ENCODE measurements at regions of chr13 and their contacts with region 1.

Region 1: GRCh38 chr13:98869408-98870090 is 108.3 kb downstream of the DOCK9 start:
- DNase-seq: no peak
- H3K4me3 Mint-ChIP-seq: no peak overlapping the region
- H3K27ac Mint-ChIP-seq: no peak overlapping the region
- H3K4me1 Mint-ChIP-seq: peaks cover 21% of the 10 kb centered on the region
- H3K27me3 Mint-ChIP-seq: no peaks in the 10 kb centered on the region

Region 2: GRCh38 chr13:98685146-98685545 is 184.4 kb before region 1 on chr13:
- CTCF ChIA-PET with region 1: no interaction called
- POLR2A ChIA-PET with region 1: no interaction called
- DNase-seq: no peak
- H3K4me3 Mint-ChIP-seq: no peak overlapping the region
- H3K27ac Mint-ChIP-seq: no peak overlapping the region
- H3K4me1 Mint-ChIP-seq: no peaks in the 10 kb centered on the region
- H3K27me3 Mint-ChIP-seq: peaks cover 14% of the 10 kb centered on the region

Region 3: GRCh38 chr13:99176309-99177276 is 307.0 kb after region 1 on chr13:
- CTCF ChIA-PET with region 1: interaction called, 15 read pairs
- POLR2A ChIA-PET with region 1: no interaction called
- DNase-seq: peak; percentile 79
- H3K4me3 Mint-ChIP-seq: no peak overlapping the region
- H3K27ac Mint-ChIP-seq: no peak overlapping the region
- H3K4me1 Mint-ChIP-seq: peaks cover 29% of the 10 kb centered on the region
- H3K27me3 Mint-ChIP-seq: peaks cover 10% of the 10 kb centered on the region